ENCODE measurements at regions of chr1 and their contacts with region 1.

Region 1: GRCh38 chr1:198157241-198157846 is 546 bp downstream of the NEK7 start:
- DNase-seq: peak; percentile 92 to 93 (median 93)
- ATAC-seq: peak; percentile 65 to 79 (median 76)
- H3K4me3 ChIP-seq: peak overlapping the region; percentile 75 to 100 (median 89)
- H3K27ac ChIP-seq: peak overlapping the region; percentile 97 to 99 (median 98)
- H3K4me1 ChIP-seq: peaks cover 0 to 65% (median 48%) of the 10 kb centered on the region in 12 donors
- H3K27me3 ChIP-seq: no peaks in the 10 kb centered on the region
- CTCF ChIP-seq: no peak
- POLR2A ChIP-seq: peak in 1 of 2 donors; percentile 62

Region 2: DNA sequence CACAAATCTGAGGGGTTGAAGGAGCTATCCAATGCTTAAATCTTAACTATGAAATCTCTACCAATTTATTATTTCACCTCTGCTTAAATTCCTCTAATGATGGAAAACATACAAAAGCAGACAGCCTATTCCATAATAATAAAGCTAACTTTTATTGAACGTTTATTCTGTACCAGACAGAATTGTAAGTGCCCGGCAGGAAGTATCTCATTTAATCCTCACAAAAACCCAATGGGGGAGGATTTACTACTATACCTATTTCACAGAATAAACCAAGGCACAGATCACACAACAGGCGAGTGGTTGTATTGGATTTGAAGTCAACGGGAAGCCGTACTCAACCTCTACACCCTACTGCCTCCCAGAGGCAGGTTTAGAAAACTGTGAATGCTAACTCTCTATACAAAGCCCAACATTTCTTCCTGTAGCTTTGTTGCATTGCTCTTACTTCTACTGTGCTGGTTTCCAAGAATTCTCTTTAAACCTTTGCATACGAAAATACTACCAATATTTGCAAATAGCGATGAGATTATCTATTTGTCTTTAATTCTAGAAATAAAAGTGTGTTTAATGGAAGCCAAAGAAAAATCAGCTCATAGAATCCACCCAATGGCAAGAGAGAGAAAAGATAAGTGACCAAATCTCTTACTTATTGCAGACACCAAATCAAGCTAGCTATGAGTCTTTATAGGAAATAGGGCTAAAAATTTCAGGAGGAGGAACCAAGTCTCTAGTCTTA is 288.4 kb before region 1 on chr1:
- intact Hi-C with region 1: no loop called
- DNase-seq: peak in 1 of 5 donors; percentile 13
- ATAC-seq: peak; percentile 51 to 89 (median 86)
- H3K4me3 ChIP-seq: no peak overlapping the region
- H3K27ac ChIP-seq: no peak overlapping the region
- H3K4me1 ChIP-seq: no peaks in the 10 kb centered on the region
- H3K27me3 ChIP-seq: no peaks in the 10 kb centered on the region
- CTCF ChIP-seq: peak; percentile 41 to 73 (median 61)
- POLR2A ChIP-seq: no peak

Region 3: GRCh38 chr1:197902454-197903195 is 254.7 kb before region 1 on chr1 and contains the start of gene C1orf53:
- intact Hi-C with region 1: loop called in 1 of 10 experiments (anchors 10 kb)
- DNase-seq: peak; percentile 80 to 92 (median 88)
- ATAC-seq: peak; percentile 93 to 100 (median 98)
- H3K4me3 ChIP-seq: peak within 1 kb of the TSS; percentile 47 to 81 (median 74)
- H3K27ac ChIP-seq: peak within 1 kb of the TSS; percentile 72 to 91 (median 84)
- H3K4me1 ChIP-seq: peaks cover 0 to 15% (median 5%) of the 10 kb centered on the region in 12 donors
- H3K27me3 ChIP-seq: peaks cover 0 to 45% (median 23%) of the 10 kb centered on the region in 9 donors
- CTCF ChIP-seq: peak in 2 of 12 donors; percentile 2 to 7
- POLR2A ChIP-seq: peak in 1 of 2 donors; percentile 58
- total RNA-seq, gene C1orf53: 2.8 to 15.2 (median 6.8) TPM

Region 4: DNA sequence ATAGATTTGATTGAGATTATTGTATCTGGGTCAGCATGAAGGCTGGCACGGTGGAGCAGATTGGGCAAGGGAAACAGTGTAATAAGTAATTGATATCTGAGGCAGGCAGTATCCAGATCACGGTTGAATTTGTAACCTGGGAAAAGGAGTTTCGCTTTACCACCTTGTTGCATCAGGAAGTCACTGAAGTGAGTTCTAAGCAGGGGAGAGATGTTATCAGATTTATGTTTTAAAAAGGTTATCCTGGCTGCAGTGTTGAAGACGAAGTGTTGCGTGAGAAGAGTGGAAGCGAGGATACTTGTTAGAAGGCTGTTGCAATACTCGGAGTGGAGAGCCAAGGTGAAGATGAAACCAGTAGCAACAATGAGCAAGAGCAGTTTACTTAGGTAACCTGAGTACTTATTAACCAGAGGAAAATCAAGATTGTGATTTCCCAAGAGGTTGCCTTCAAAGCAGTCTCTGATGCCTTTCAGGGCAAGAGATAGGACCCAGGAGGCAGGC is 162.4 kb before region 1 on chr1:
- intact Hi-C with region 1: no loop called
- DNase-seq: no peak
- ATAC-seq: no peak
- H3K4me3 ChIP-seq: no peak overlapping the region
- H3K27ac ChIP-seq: no peak overlapping the region
- H3K4me1 ChIP-seq: no peaks in the 10 kb centered on the region
- H3K27me3 ChIP-seq: no peaks in the 10 kb centered on the region
- CTCF ChIP-seq: no peak
- POLR2A ChIP-seq: no peak

Region 5: GRCh38 chr1:198119906-198120305 is 37.4 kb before region 1 on chr1:
- intact Hi-C with region 1: loop called in 1 of 10 experiments (anchors 1 kb)
- DNase-seq: no peak
- ATAC-seq: no peak
- H3K4me3 ChIP-seq: no peak overlapping the region
- H3K27ac ChIP-seq: no peak overlapping the region
- H3K4me1 ChIP-seq: peaks cover 0 to 30% (median 13%) of the 10 kb centered on the region in 12 donors
- H3K27me3 ChIP-seq: no peaks in the 10 kb centered on the region
- CTCF ChIP-seq: no peak
- POLR2A ChIP-seq: no peak

Region 6: DNA sequence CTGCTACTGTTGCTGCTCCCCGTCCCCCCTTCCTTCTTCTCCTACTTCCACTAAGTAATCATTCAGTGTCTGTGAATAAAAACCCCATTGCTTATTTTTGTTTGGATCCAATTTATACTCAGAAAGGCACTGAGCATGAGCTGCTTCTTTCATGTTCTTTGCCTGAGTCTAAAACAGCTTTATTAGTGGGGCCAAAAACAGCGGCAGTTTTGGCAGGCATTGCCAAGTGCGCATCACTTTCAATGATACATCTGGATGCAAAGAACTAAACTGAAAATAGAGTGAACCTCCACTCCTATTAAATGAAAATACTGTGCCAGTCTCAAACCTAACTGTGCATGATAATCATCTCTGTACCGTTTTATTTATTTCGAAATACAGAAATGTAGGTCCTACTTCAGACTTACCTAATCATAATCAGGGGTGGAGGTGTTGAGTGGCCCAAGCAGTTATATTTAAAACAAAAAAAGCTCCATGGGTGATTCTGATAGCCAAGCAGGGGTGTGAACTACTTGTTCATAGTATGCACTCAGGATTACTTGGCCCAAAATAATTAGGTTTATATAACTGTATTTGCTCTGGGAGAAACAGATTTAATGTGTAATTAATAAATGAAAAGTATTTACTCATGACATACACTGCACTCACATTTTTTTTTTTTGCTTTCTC is 47.8 kb after region 1 on chr1:
- intact Hi-C with region 1: loop called in 3 of 10 experiments (anchors 5 to 10 kb)
- DNase-seq: peak in 2 of 5 donors; percentile 26 to 55
- ATAC-seq: peak; percentile 43 to 74 (median 56)
- H3K4me3 ChIP-seq: peak overlapping the region in 3 of 12 donors; percentile 5 to 7 (median 5)
- H3K27ac ChIP-seq: peak overlapping the region in 11 of 12 donors; percentile 3 to 60 (median 42)
- H3K4me1 ChIP-seq: peaks cover 0 to 65% (median 40%) of the 10 kb centered on the region in 12 donors
- H3K27me3 ChIP-seq: no peaks in the 10 kb centered on the region
- CTCF ChIP-seq: no peak
- POLR2A ChIP-seq: no peak

Region 7: DNA sequence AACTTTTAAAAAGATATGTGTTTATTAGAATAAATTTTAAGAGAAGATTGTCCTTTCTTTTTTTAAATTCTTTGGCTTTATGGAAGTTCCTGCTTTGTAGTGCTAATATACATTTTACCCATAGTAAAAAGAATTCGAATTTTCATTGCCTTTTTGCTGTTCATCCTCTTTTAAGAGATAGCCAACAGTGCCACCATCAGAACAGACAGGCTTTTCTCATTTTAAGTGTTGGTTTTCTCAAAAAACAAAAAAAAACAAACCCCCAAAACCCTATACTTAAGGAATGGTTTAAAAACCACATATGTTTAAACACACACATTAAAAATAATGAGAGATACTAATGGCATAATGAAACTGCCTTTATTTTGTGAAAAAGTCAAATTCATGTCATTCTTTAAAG is 118.3 kb after region 1 on chr1:
- intact Hi-C with region 1: loop called in 2 of 10 experiments (anchors 5 kb)
- DNase-seq: no peak
- ATAC-seq: no peak
- H3K4me3 ChIP-seq: no peak overlapping the region
- H3K27ac ChIP-seq: no peak overlapping the region
- H3K4me1 ChIP-seq: peaks cover 4 to 46% (median 26%) of the 10 kb centered on the region in 12 donors
- H3K27me3 ChIP-seq: no peaks in the 10 kb centered on the region
- CTCF ChIP-seq: no peak
- POLR2A ChIP-seq: no peak

Region 8: DNA sequence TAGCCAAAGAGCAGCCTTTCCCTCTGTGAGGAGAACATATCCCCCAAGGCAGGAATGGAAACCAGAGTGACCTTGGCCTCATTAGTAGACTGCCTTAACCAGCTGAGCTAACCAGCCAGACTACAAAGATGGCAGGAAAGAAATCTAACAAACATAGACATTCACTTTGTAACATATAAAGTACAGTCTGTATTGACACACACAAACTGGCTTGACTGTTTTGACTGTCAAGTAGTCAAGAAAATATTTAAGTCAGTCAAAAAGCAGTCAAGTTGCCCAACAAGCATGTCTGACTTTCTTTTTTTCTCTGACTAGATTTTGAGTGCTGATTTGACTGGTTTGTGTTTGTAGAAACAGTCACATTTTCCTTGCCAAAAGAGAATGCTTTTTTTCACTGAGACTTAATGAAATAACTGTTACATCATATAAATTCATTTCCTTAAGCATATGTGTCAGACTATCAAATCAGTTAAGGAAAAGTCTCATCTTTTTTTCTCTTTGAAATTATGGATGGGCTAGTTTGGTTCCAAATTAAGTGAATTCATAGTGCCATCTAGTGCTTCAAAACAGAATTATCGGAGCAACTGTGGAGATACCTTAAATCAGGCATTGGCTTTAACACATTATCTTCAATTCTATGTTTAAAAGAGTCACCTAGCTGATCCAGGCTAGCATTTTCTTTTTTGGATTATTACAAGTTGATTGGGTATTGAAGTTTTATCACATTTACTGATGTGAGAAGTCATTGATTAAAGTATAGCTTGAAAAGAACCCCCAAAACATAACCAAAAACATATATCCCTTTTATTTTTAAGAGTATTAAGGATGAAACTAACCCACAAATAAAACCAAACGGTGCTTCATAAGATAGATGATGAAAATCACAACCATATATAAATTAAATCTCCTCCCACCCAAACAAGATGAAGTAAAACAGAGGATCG is 308.1 kb after region 1 on chr1:
- intact Hi-C with region 1: loop called in 1 of 10 experiments (anchors 5 kb)
- DNase-seq: no peak
- ATAC-seq: no peak
- H3K4me3 ChIP-seq: no peak overlapping the region
- H3K27ac ChIP-seq: no peak overlapping the region
- H3K4me1 ChIP-seq: peaks cover 0 to 5% (median 0%) of the 10 kb centered on the region in 12 donors
- H3K27me3 ChIP-seq: no peaks in the 10 kb centered on the region
- CTCF ChIP-seq: peak; percentile 43 to 75 (median 61)
- POLR2A ChIP-seq: no peak